Gastrocnemius medialis (tissue), 4 donors: ENCODE measurements at regions of chr9 and their contacts with region 1.

Region 1: GRCh38 chr9:136024696-136025316 is 63.6 kb upstream of the UBAC1 start:
- DNase-seq: no peak
- ATAC-seq: no peak
- H3K4me3 ChIP-seq: no peak overlapping the region
- H3K27ac ChIP-seq: peak overlapping the region in 2 of 4 donors; percentile 32 to 65
- H3K4me1 ChIP-seq: peaks cover 45 to 55% of the 10 kb centered on the region in 2 donors
- H3K27me3 ChIP-seq: no peaks in the 10 kb centered on the region
- CTCF ChIP-seq: no peak
- POLR2A ChIP-seq: no peak

Region 2: DNA sequence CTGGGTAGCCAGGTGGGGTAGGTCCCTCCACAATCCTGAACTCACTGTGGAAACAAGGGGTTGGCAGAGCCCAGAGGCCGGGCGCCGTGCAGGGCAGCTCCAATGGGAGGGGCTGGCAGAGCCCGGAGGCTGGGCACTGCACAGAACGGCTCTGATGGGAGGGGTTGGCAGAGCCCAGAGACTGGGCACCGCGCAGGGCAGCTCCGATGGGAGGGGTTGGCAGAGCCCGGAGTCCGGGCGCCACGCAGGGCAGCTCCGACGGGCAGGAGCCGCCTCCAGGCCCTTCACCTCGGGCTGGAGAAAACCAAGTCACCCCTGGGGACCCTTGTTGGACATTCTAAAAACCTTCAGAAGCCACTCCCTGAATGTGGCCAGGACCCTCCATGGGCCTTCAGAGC is 61.0 kb after region 1 on chr9:
- in situ Hi-C with region 1: no loop called
- intact Hi-C with region 1: loop called (anchors 1 kb)
- DNase-seq: peak; percentile 63 to 87
- ATAC-seq: peak; percentile 58 to 73
- H3K4me3 ChIP-seq: peak overlapping the region in 3 of 4 donors; percentile 5 to 32 (median 5)
- H3K27ac ChIP-seq: peak overlapping the region; percentile 95 to 100 (median 98)
- H3K4me1 ChIP-seq: peaks cover 79 to 85% of the 10 kb centered on the region in 2 donors
- H3K27me3 ChIP-seq: no peaks in the 10 kb centered on the region
- CTCF ChIP-seq: no peak
- POLR2A ChIP-seq: peak; percentile 61 to 67

Region 3: GRCh38 chr9:136185596-136186366 is 161.0 kb after region 1 on chr9:
- in situ Hi-C with region 1: no loop called
- intact Hi-C with region 1: no loop called
- DNase-seq: no peak
- ATAC-seq: no peak
- H3K4me3 ChIP-seq: no peak overlapping the region
- H3K27ac ChIP-seq: no peak overlapping the region
- H3K4me1 ChIP-seq: no peaks in the 10 kb centered on the region
- H3K27me3 ChIP-seq: peaks cover 37 to 56% (median 44%) of the 10 kb centered on the region in 3 donors
- CTCF ChIP-seq: no peak
- POLR2A ChIP-seq: no peak

Region 4: GRCh38 chr9:137086531-137087408 is 1062.0 kb after region 1 on chr9 and contains the start of gene MAN1B1:
- in situ Hi-C with region 1: no loop called
- intact Hi-C with region 1: no loop called
- DNase-seq: peak; percentile 99
- ATAC-seq: peak; percentile 93 to 94
- H3K4me3 ChIP-seq: peak within 1 kb of the TSS; percentile 67 to 92 (median 78)
- H3K27ac ChIP-seq: peak within 1 kb of the TSS; percentile 91 to 96 (median 92)
- H3K4me1 ChIP-seq: peaks cover 18 to 21% of the 10 kb centered on the region in 2 donors
- H3K27me3 ChIP-seq: no peaks in the 10 kb centered on the region
- CTCF ChIP-seq: peak in 1 of 5 experiments; percentile 23
- POLR2A ChIP-seq: peak; percentile 82 to 83
- total RNA-seq, gene MAN1B1: 15.9 to 31.9 (median 21.1) TPM